ENCODE measurements at regions of chr3 and their contacts with region 1.

Region 1: GRCh38 chr3:103085465-103085864 is 650.6 kb downstream of the ZPLD1 start:
- DNase-seq: peak; percentile 55 to 59
- H3K4me3 ChIP-seq: no peak overlapping the region
- H3K4me3 Mint-ChIP-seq: peak overlapping the region; percentile 4
- H3K27ac Mint-ChIP-seq: peak overlapping the region; percentile 19
- H3K4me1 ChIP-seq: peaks cover 41% of the 10 kb centered on the region
- H3K4me1 Mint-ChIP-seq: peaks cover 16% of the 10 kb centered on the region
- H3K27me3 ChIP-seq: no peaks in the 10 kb centered on the region
- H3K27me3 Mint-ChIP-seq: no peaks in the 10 kb centered on the region
- CTCF ChIP-seq: no peak

Region 2: GRCh38 chr3:102887431-102887830 is 198.0 kb before region 1 on chr3:
- CTCF ChIA-PET with region 1: no interaction called
- POLR2A ChIA-PET with region 1: no interaction called
- intact Hi-C with region 1: loop called (anchors 2 kb)
- DNase-seq: no peak
- H3K4me3 ChIP-seq: no peak overlapping the region
- H3K4me3 Mint-ChIP-seq: no peak overlapping the region
- H3K27ac Mint-ChIP-seq: no peak overlapping the region
- H3K4me1 ChIP-seq: peaks cover 27% of the 10 kb centered on the region
- H3K4me1 Mint-ChIP-seq: peaks cover 13% of the 10 kb centered on the region
- H3K27me3 ChIP-seq: no peaks in the 10 kb centered on the region
- H3K27me3 Mint-ChIP-seq: no peaks in the 10 kb centered on the region
- CTCF ChIP-seq: no peak

Region 3: GRCh38 chr3:103059432-103059831 is 26.0 kb before region 1 on chr3:
- CTCF ChIA-PET with region 1: no interaction called
- POLR2A ChIA-PET with region 1: no interaction called
- intact Hi-C with region 1: loop called (anchors 1 kb)
- DNase-seq: peak; percentile 47 to 55
- H3K4me3 ChIP-seq: no peak overlapping the region
- H3K4me3 Mint-ChIP-seq: no peak overlapping the region
- H3K27ac Mint-ChIP-seq: no peak overlapping the region
- H3K4me1 ChIP-seq: peaks cover 23% of the 10 kb centered on the region
- H3K4me1 Mint-ChIP-seq: peaks cover 18% of the 10 kb centered on the region
- H3K27me3 ChIP-seq: no peaks in the 10 kb centered on the region
- H3K27me3 Mint-ChIP-seq: no peaks in the 10 kb centered on the region
- CTCF ChIP-seq: no peak

Region 4: DNA sequence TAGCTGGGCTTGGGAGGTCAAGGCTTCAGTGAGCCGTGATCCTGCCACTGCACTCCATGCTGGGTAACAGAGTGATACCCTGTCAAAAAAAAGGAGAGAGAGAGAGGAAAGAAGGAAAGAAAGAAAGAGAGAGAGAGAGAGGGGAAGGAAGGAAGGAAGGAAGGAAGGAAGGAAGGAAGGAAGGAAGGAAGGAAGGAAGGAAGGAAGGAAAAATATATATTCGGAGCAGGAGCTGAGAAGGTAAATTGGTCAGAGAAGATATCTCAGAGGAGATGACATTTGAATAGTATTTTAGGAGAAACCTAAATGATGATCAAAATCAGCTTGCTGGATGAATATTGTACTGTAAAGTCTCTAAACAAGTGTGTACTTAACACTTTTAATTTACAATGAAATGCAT is 17.5 kb before region 1 on chr3:
- CTCF ChIA-PET with region 1: no interaction called
- POLR2A ChIA-PET with region 1: no interaction called
- intact Hi-C with region 1: loop called (anchors 2 kb)
- DNase-seq: no peak
- H3K4me3 ChIP-seq: no peak overlapping the region
- H3K4me3 Mint-ChIP-seq: no peak overlapping the region
- H3K27ac Mint-ChIP-seq: no peak overlapping the region
- H3K4me1 ChIP-seq: no peaks in the 10 kb centered on the region
- H3K4me1 Mint-ChIP-seq: no peaks in the 10 kb centered on the region
- H3K27me3 ChIP-seq: no peaks in the 10 kb centered on the region
- H3K27me3 Mint-ChIP-seq: no peaks in the 10 kb centered on the region
- CTCF ChIP-seq: no peak

Region 5: GRCh38 chr3:103127737-103128136 is 42.3 kb after region 1 on chr3:
- CTCF ChIA-PET with region 1: no interaction called
- POLR2A ChIA-PET with region 1: no interaction called
- intact Hi-C with region 1: loop called (anchors 5 kb)
- DNase-seq: no peak
- H3K4me3 ChIP-seq: no peak overlapping the region
- H3K4me3 Mint-ChIP-seq: no peak overlapping the region
- H3K27ac Mint-ChIP-seq: no peak overlapping the region
- H3K4me1 ChIP-seq: no peaks in the 10 kb centered on the region
- H3K4me1 Mint-ChIP-seq: no peaks in the 10 kb centered on the region
- H3K27me3 ChIP-seq: no peaks in the 10 kb centered on the region
- H3K27me3 Mint-ChIP-seq: no peaks in the 10 kb centered on the region
- CTCF ChIP-seq: no peak